ENCODE measurements at regions of chr7 and their contacts with region 1.

Region 1: DNA sequence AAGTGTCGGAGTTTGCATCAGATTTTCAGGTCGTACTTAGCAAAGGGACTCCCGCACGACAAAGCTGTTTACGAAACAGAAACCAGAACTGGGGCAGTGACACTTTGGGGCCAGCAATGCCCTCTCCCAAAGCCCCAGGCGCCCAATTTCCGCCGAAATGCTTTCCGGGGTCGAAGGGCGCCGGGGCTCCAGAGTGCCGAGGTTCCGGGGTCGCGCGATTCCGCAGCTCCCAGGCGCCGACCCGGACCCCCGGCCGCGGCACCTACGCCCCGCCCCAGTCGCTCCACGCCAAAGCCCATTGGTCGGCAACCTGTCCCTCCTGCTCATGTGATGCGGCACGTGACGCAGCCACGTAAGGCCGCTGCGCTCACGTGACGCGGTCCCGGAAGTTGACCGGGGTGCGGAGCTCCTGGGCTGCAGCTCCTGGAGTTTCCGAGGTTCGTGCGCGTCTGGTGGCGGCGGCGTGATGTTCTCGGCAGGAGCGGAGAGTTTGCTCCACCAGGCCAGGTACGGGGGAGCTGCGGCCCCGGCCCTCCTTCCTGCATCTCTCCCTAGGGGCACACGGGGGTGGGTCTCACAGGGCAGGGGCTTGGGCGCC is at the start of gene AP5Z1:
- DNase-seq: peak; percentile 91
- ATAC-seq: peak; percentile 94
- H3K4me3 Mint-ChIP-seq: peak within 1 kb of the TSS; percentile 99
- H3K27ac Mint-ChIP-seq: peak within 1 kb of the TSS; percentile 98
- H3K4me1 Mint-ChIP-seq: peaks cover 41% of the 10 kb centered on the region
- H3K27me3 Mint-ChIP-seq: no peaks in the 10 kb centered on the region
- CTCF ChIP-seq: no peak
- total RNA-seq, gene AP5Z1: 98.3 and 111 TPM in 2 replicates

Region 2: DNA sequence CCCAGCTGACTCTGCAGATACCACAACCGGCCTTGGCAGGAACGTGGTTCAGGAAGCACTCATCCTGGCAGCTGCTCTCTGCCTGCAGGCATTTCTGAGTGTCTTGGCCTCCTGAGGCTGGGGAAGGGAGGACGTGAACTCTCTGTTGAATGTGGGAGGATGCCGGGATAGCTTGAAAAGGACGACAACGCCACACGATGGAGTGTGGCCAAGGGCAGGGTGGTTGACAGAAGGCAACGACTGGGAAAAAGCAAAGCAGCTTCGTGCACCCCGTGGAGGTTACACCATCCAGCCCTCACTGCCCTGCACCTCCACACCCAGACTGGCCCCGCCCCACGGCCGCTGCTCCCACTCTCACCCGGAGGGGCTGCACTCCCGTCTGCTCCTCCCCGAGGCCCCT is 559.3 kb before region 1 on chr7:
- CTCF ChIA-PET with region 1: no interaction called
- POLR2A ChIA-PET with region 1: no interaction called
- intact Hi-C with region 1: no loop called
- DNase-seq: no peak
- ATAC-seq: no peak
- H3K4me3 Mint-ChIP-seq: no peak overlapping the region
- H3K27ac Mint-ChIP-seq: no peak overlapping the region
- H3K4me1 Mint-ChIP-seq: no peaks in the 10 kb centered on the region
- H3K27me3 Mint-ChIP-seq: no peaks in the 10 kb centered on the region
- CTCF ChIP-seq: no peak

Region 3: DNA sequence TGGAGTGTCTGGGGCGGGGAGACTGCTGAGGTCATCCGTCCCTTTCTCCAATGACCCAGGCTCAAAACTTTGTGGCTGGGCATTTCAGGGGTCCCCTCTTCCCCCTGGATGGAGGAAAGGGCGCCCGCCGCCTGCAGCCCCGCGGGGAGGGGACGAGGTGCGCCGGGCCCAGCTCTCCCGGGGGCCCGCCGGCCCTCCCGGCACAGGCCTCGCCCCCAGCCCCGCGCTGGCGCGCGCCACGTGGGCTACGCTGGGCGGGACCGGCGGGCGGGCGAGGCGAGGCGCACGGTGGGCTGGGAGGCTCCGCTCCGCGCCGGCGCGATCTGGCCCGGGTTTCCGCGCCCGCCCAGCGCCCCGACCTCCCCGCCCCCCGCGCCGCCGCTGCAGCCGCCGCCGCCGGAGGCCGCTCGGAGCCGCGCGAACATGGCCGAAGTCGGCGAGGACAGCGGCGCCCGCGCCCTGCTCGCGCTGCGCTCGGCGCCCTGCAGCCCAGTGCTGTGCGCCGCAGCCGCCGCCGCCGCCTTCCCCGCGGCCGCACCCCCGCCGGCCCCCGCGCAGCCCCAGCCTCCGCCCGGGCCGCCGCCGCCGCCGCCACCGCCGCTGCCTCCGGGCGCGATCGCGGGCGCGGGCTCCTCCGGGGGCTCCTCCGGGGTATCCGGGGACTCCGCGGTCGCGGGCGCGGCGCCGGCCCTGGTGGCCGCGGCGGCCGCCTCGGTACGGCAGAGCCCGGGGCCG is 93.3 kb before region 1 on chr7 and contains the start of gene FOXK1:
- CTCF ChIA-PET with region 1: interaction called, 7 read pairs
- POLR2A ChIA-PET with region 1: interaction called, 54 read pairs
- intact Hi-C with region 1: loop called (anchors 1 kb)
- DNase-seq: peak; percentile 85
- ATAC-seq: peak; percentile 83
- H3K4me3 Mint-ChIP-seq: peak within 1 kb of the TSS; percentile 92
- H3K27ac Mint-ChIP-seq: peak within 1 kb of the TSS; percentile 95
- H3K4me1 Mint-ChIP-seq: peaks cover 30% of the 10 kb centered on the region
- H3K27me3 Mint-ChIP-seq: peaks cover 3% of the 10 kb centered on the region
- CTCF ChIP-seq: no peak
- total RNA-seq, gene FOXK1: 37.5 and 42.7 TPM in 2 replicates

Region 4: DNA sequence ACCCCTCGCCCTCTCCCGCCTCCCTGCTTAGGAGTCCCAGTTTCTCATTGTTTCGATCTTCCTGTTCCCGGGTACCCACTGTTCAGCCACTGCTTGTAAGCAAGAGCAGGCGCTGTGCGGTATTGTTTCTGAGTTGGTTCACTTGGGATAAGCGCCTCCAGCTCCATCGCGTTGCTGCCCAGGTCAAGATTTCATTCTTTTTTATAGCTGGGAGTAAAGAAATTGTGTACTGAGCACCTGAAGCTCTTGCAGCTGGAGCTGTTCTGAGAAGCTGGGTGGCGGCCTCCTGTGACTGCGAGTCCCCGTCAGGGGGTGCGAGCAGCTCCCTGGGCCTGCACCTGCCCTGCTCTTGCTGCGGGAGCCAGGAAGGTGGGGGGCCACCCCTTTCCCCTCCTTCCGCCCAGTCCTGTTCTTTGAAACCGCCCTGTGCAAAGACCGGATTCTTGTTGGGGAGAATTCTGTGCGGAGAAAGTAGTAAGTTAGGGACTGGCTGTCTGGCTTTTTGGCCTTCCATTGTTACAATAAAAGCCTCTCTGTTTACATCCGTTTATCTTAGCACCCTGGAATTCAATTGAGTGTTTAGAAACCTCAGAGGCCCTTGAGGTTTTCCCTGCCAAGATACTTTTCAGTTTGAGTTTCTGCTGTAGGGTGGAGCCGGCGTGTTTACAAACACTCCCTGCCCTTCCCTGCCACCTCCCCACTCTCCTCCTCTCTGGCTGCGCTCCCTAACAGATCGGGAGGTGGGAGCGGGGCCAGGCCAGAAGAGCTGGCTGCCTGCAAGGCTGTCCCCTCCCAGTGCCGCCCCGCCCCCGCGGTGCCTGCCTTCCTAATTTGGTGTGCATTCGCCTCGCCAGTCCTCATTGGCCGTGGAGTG is 30.7 kb before region 1 on chr7:
- CTCF ChIA-PET with region 1: no interaction called
- POLR2A ChIA-PET with region 1: interaction called, 35 read pairs
- intact Hi-C with region 1: loop called (anchors 1 kb)
- DNase-seq: peak; percentile 67
- ATAC-seq: peak; percentile 82
- H3K4me3 Mint-ChIP-seq: peak overlapping the region; percentile 81
- H3K27ac Mint-ChIP-seq: peak overlapping the region; percentile 92
- H3K4me1 Mint-ChIP-seq: peaks cover 58% of the 10 kb centered on the region
- H3K27me3 Mint-ChIP-seq: no peaks in the 10 kb centered on the region
- CTCF ChIP-seq: no peak

Region 5: DNA sequence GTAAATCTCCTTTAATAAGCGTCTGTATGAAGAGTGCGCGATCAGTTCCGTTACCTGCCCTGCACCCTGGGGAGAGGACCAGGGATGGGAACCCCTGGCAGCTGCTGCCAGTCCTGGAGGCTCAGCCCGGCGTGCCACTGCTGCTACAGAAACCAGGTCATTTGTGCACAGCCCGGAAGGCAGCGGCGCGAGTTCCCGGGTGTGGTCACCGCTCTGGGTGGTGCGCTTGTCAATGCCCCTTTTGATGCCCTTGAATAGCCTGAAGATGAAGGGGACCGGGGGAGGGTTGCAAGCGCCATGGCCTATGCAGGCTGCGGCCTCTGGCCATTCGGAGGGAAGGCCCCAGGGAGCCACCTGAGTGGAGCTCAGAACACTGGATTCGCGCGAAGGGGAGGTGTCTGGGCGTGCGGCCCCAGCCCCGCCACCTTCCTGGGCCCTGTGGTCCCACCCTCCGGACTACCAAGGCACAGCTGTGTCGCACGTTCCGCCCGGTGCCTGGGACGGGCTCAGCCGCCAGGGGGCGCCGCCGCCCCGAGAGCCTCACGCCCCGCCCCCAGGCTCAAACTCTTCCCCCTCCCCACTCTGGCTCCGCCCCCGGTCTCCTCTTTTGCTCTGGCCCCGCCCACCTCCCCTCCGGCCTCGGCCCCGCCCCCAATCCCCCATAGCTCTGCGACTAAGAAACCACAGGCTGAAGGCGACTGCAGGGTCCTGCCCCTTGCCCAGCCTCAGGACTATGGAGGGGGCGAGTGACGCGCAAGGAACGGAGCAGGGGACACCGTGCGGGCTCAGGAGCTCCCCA is 16.6 kb after region 1 on chr7:
- CTCF ChIA-PET with region 1: interaction called, 10 read pairs
- POLR2A ChIA-PET with region 1: interaction called, 47 read pairs
- intact Hi-C with region 1: loop called (anchors 1 kb)
- DNase-seq: peak; percentile 80
- ATAC-seq: peak; percentile 91
- H3K4me3 Mint-ChIP-seq: no peak overlapping the region
- H3K27ac Mint-ChIP-seq: no peak overlapping the region
- H3K4me1 Mint-ChIP-seq: peaks cover 4% of the 10 kb centered on the region
- H3K27me3 Mint-ChIP-seq: no peaks in the 10 kb centered on the region
- CTCF ChIP-seq: no peak